ENCODE measurements at regions of chr10 and their contacts with region 1.

Region 1: DNA sequence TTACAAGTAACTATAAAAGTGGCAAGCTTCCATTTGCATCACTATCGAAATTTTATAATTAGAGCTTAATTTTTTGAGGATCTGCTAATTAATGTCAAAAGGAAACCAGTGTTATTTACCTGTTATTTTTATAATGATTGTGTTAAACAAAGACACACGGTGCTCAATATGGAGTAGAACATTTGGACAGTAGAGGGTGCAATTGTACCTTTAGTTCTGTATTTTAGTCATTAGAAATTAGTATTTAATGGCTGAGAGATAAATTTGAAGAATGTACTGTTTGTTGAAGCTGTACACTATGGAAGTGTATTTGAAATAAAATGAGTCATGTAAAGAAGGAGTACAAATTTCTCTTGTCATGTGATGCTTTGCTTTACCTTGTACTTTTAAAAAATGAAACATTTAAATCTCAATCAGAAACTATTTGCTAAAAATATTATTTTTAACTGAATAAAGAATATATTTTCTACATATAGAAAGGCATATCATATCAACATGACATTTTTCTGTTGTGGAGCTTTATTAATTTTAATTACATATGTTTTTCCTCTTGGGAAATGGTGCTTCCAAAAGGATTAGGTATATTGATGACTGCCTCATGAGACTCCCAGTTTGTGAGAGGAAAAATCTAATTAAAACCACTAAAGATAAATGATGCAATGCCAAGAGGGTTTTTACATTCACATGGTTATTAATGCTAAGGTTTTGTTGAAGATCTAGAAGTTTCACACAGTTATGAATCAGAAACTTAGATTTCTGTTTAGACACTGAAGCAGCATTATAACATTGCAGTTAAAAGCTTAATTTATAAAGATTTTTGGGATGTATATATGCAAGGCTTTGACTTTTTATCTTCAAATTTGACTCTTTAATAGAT is 10.4 kb upstream of the PRKG1 start:
- DNase-seq: no peak
- H3K4me3 ChIP-seq: no peak overlapping the region
- H3K27ac ChIP-seq: no peak overlapping the region
- H3K27me3 ChIP-seq: peaks cover 0 to 6% (median 0%) of the 10 kb centered on the region in 45 donors
- CTCF ChIP-seq: peak; percentile 28 to 78 (median 59)

Region 2: DNA sequence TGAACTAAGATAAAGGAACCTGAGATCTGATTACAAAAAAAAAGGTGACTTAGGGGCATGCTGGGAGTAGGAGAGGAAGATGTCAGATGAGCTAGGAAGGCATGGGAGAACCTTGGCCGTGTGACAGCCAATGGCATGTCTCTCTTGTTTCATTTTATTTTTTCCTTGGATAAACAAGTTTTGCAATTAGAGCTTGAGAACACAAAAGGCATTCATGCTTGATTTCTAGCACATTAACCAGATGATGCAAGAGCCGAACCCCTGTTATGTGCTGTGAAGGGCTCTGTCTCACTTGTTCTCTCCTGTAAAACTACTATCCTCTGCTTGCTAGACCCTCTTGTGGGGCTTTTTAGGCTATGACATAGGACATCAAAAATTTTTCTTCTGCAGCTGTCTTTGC is 678.3 kb before region 1 on chr10:
- intact Hi-C with region 1: no loop called
- DNase-seq: peak in 6 of 10 donors; percentile 9 to 65 (median 40)
- H3K4me3 ChIP-seq: peak overlapping the region in 20 of 59 donors; percentile 0 to 40 (median 11)
- H3K27ac ChIP-seq: peak overlapping the region in 58 of 59 donors; percentile 55 to 95 (median 82)
- H3K27me3 ChIP-seq: no peaks in the 10 kb centered on the region
- CTCF ChIP-seq: peak in 2 of 56 donors; percentile 10 to 11

Region 3: DNA sequence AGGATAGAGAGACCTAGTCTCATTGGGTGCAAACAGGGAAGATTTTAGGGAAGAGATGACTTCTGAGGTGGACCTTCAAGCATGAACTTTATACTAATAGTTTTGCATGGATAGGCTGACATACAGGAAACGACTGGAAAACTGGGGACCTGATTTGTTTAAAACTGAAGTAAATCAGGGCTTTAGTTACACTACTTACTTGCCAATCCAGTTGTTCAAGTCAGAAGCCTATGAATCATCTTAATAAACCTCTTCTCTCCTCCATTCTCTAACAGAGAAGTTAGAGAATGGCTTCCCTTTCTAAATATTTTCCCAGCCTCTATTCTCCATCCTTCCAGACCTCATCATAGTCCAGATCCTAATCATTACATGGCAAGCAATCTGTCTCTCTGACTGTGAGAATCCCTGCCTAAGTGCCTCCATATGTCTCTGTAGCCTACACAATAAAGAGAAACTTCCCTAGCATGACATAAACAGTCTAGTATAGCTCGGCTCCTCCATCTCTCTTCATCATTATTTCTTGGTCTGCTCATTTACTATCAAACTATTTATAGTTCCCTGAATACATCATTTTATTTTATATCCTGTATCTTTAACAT is 66.1 kb after region 1 on chr10:
- intact Hi-C with region 1: no loop called
- DNase-seq: no peak
- H3K4me3 ChIP-seq: no peak overlapping the region
- H3K27ac ChIP-seq: no peak overlapping the region
- H3K27me3 ChIP-seq: no peaks in the 10 kb centered on the region
- CTCF ChIP-seq: no peak

Region 4: GRCh38 chr10:52004342-52004949 is 940.5 kb after region 1 on chr10:
- intact Hi-C with region 1: loop called in 1 of 2 experiments (anchors 10 kb)
- DNase-seq: no peak
- H3K4me3 ChIP-seq: no peak overlapping the region
- H3K27ac ChIP-seq: no peak overlapping the region
- H3K27me3 ChIP-seq: peaks cover 0 to 4% (median 0%) of the 10 kb centered on the region in 45 donors
- CTCF ChIP-seq: peak in 54 of 56 donors; percentile 34 to 74 (median 62)

Measured in dorsolateral prefrontal cortex (tissue), 120 donors.